Breast epithelium (tissue), 4 donors: ENCODE measurements at regions of chr18 and their contacts with region 1.

Region 1: GRCh38 chr18:24726727-24727492 is 266.5 kb downstream of the HRH4 start:
- DNase-seq: peak; percentile 32 to 62
- H3K4me3 ChIP-seq: peak overlapping the region; percentile 37 to 58 (median 37)
- H3K27ac ChIP-seq: peak overlapping the region; percentile 48 to 59
- H3K4me1 ChIP-seq: no peaks in the 10 kb centered on the region
- H3K27me3 ChIP-seq: no peaks in the 10 kb centered on the region
- CTCF ChIP-seq: peak; percentile 33 to 82 (median 78)
- POLR2A ChIP-seq: no peak

Region 2: DNA sequence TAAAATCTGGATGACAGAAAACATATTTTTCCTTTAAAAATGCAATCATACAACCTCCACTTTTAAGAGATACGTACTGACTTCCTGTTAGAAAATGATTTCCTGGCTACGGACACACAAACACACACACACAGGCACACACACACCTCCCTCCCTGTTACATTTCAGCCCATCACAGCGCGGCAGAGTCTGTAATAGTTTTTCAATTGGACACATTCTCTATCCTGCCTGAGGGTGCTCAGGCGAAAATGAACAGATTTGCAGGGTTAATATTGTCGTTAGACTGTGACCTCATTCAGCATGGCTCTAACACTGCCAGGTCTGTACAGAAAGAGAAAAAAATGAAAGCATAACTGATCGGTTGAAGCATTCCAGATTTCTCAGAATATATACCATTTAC is 1776.5 kb after region 1 on chr18:
- intact Hi-C with region 1: loop called (anchors 5 kb)
- DNase-seq: no peak
- H3K4me3 ChIP-seq: peak overlapping the region in 2 of 3 donors; percentile 7 to 12
- H3K27ac ChIP-seq: peak overlapping the region in 1 of 2 donors; percentile 27
- H3K4me1 ChIP-seq: no peaks in the 10 kb centered on the region
- H3K27me3 ChIP-seq: no peaks in the 10 kb centered on the region
- CTCF ChIP-seq: no peak
- POLR2A ChIP-seq: no peak